BJ (cell line): ENCODE measurements at regions of chr11 and their contacts with region 1.

Region 1: GRCh38 chr11:122772945-122773344 is 65.4 kb upstream of the CRTAM start:
- DNase-seq: no peak
- H3K4me3 ChIP-seq: no peak overlapping the region
- H3K27me3 ChIP-seq: no peaks in the 10 kb centered on the region
- CTCF ChIP-seq: no peak

Region 2: DNA sequence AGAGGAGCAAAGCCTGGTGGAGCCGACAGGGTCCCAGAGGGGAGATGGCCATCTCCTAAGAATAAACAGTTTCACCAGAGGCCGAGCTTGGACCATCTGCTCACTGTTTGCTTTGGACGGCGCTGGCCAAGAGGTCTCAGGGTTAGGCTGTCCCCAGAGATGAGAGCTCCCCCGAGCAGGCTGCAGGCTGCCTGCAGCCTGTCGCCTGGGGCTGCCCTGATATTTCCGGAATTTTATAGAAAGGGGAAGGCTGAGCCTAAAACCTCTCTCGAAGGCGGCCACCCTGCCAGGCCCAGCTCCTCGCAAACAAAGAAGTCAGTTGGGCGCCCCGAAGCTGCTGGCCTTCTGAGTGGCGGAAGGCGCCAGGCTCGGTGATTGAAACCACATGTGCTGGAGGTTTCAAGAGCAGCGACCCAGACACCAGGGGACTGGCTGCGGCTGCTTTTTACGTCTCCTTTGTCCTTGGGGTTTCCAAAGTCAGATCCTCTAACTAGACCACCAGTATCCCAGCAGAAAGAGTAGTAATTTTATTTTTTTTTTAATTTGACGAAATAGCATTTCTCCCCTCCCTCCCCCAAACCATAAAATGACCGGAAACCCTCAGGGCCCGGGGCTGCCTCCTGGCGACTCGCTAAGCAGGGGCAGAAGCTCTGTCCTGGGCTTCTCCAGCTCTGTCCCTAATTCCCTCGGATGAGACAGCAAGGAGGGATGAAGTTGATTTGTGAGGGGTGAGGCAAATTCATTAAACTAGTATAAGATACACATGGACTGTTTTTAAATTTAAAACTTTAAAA is 364.7 kb after region 1 on chr11:
- CTCF ChIA-PET with region 1: no interaction called
- POLR2A ChIA-PET with region 1: interaction called, 20 read pairs
- DNase-seq: peak; percentile 70
- H3K4me3 ChIP-seq: peak overlapping the region; percentile 15
- H3K27me3 ChIP-seq: no peaks in the 10 kb centered on the region
- CTCF ChIP-seq: peak; percentile 52